Activated CD4-positive, alpha-beta memory T cell treated with anti-CD3 and anti-CD28 coated beads for 36 hours (primary cell): ENCODE measurements at regions of chr10 and their contacts with region 1.

Region 1: GRCh38 chr10:8577686-8578085 is 523.2 kb downstream of the GATA3 start:
- DNase-seq: peak; percentile 38
- H3K4me3 Mint-ChIP-seq: peak overlapping the region; percentile 13
- H3K27ac Mint-ChIP-seq: peak overlapping the region; percentile 74
- H3K4me1 Mint-ChIP-seq: peaks cover 49% of the 10 kb centered on the region
- H3K27me3 Mint-ChIP-seq: peaks cover 26% of the 10 kb centered on the region

Region 2: GRCh38 chr10:8065651-8066050 is 512.0 kb before region 1 on chr10:
- CTCF ChIA-PET with region 1: no interaction called
- POLR2A ChIA-PET with region 1: no interaction called
- intact Hi-C with region 1: loop called (anchors 5 kb)
- DNase-seq: no peak
- H3K4me3 Mint-ChIP-seq: peak overlapping the region; percentile 54
- H3K27ac Mint-ChIP-seq: peak overlapping the region; percentile 91
- H3K4me1 Mint-ChIP-seq: peaks cover 96% of the 10 kb centered on the region
- H3K27me3 Mint-ChIP-seq: no peaks in the 10 kb centered on the region

Region 3: GRCh38 chr10:8254350-8254749 is 323.3 kb before region 1 on chr10:
- CTCF ChIA-PET with region 1: no interaction called
- POLR2A ChIA-PET with region 1: no interaction called
- intact Hi-C with region 1: loop called (anchors 5 kb)
- DNase-seq: peak; percentile 54
- H3K4me3 Mint-ChIP-seq: peak overlapping the region; percentile 53
- H3K27ac Mint-ChIP-seq: peak overlapping the region; percentile 68
- H3K4me1 Mint-ChIP-seq: peaks cover 23% of the 10 kb centered on the region
- H3K27me3 Mint-ChIP-seq: no peaks in the 10 kb centered on the region

Region 4: GRCh38 chr10:8487346-8487745 is 90.3 kb before region 1 on chr10:
- CTCF ChIA-PET with region 1: no interaction called
- POLR2A ChIA-PET with region 1: no interaction called
- intact Hi-C with region 1: no loop called
- DNase-seq: no peak
- H3K4me3 Mint-ChIP-seq: no peak overlapping the region
- H3K27ac Mint-ChIP-seq: no peak overlapping the region
- H3K4me1 Mint-ChIP-seq: peaks cover 2% of the 10 kb centered on the region
- H3K27me3 Mint-ChIP-seq: peaks cover 7% of the 10 kb centered on the region

Region 5: GRCh38 chr10:8790381-8790780 is 212.7 kb after region 1 on chr10:
- CTCF ChIA-PET with region 1: no interaction called
- POLR2A ChIA-PET with region 1: no interaction called
- intact Hi-C with region 1: no loop called
- DNase-seq: no peak
- H3K4me3 Mint-ChIP-seq: no peak overlapping the region
- H3K27ac Mint-ChIP-seq: no peak overlapping the region
- H3K4me1 Mint-ChIP-seq: peaks cover 9% of the 10 kb centered on the region
- H3K27me3 Mint-ChIP-seq: no peaks in the 10 kb centered on the region

Region 6: GRCh38 chr10:8990280-8990987 is 412.7 kb after region 1 on chr10:
- CTCF ChIA-PET with region 1: no interaction called
- POLR2A ChIA-PET with region 1: no interaction called
- intact Hi-C with region 1: loop called (anchors 5 kb)
- DNase-seq: no peak
- H3K4me3 Mint-ChIP-seq: no peak overlapping the region
- H3K27ac Mint-ChIP-seq: peak overlapping the region; percentile 35
- H3K4me1 Mint-ChIP-seq: peaks cover 55% of the 10 kb centered on the region
- H3K27me3 Mint-ChIP-seq: no peaks in the 10 kb centered on the region

Region 7: GRCh38 chr10:9091530-9092093 is 513.9 kb after region 1 on chr10:
- CTCF ChIA-PET with region 1: no interaction called
- POLR2A ChIA-PET with region 1: no interaction called
- intact Hi-C with region 1: loop called (anchors 2 kb)
- DNase-seq: peak; percentile 48
- H3K4me3 Mint-ChIP-seq: no peak overlapping the region
- H3K27ac Mint-ChIP-seq: peak overlapping the region; percentile 30
- H3K4me1 Mint-ChIP-seq: peaks cover 24% of the 10 kb centered on the region
- H3K27me3 Mint-ChIP-seq: no peaks in the 10 kb centered on the region